ENCODE measurements at regions of chr1 and their contacts with region 1.

Region 1: DNA sequence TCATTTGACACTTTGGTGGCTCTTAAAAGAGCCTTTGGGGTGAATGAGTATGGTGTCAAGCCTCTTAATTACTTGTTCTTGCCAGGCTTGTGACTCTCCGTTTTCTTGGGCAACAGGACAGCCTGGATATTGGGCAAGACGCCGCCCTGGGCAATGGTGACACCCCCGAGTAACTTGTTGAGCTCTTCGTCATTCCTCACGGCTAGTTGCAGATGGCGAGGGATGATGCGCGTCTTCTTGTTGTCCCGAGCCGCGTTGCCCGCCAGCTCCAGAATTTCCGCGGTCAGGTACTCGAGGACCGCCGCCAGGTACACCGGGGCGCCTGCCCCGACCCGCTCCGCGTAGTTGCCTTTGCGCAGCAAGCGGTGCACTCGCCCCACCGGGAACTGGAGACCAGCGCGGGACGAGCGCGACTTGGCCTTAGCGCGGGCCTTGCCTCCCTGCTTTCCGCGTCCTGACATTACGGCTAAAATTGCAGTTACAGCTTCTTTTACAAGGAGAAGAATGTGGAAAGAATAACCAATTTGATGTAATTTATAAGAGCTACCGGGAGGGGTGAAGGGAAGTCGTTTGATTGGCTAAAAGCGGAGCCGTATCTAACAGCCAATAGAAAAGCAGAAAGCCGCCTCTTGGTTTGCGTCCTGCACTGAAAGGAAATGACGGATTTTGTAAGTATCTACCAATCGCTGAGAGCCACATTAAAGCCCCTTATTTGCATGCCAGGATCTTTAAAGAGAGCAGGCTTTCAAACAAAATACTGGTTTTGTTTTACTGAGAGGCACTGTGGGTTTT is 11.7 kb upstream of the BOLA1 start:
- DNase-seq: peak; percentile 86
- ATAC-seq: peak; percentile 80

Region 2: DNA sequence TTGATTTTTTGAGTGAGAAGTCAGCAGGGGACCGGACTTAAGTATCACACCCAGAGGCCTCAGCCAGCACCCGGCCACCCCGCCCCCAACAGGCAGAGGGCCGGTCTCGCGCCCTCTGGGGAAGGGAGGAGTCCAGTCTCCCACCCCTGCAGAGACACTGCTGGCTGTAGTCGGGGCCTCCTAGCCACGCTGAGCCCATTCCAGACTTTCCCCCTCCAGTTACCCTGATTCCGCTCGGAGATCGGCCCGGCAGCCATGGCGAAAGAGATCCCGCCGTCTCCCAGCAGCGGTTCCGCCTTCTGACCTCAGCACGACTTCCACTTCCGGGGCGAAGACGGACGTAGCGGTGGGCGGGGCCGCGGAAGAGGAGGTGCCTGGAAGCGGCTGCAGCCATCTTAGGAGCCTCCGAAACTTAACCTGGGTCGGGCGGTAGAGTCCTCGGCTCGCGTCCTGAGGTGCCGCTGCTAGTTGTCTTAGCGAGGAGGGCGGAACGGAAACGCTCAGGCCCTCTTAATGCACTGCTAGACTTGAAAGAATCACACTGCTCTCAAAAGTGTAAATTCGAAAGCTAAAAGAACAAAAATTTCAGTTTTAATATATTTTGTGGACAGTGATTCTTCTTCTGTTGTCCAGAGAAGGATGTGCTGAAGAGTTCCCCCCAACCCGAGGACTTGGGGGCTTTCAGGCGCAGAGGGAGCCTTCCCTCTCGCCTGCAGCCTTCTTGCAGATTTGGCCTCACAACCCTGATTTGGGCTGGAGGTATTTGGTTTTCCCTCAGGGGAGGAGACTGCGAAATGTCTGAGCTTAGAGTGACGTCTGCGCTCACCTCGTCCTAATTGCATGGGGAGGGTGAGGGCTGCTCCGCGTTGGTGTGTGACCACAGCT is 40.1 kb after region 1 on chr1 and contains the start of gene SF3B4:
- intact Hi-C with region 1: loop called (anchors 1 kb)
- DNase-seq: peak; percentile 97
- ATAC-seq: peak; percentile 99
- total RNA-seq, gene SF3B4: 24.8 TPM

Region 3: DNA sequence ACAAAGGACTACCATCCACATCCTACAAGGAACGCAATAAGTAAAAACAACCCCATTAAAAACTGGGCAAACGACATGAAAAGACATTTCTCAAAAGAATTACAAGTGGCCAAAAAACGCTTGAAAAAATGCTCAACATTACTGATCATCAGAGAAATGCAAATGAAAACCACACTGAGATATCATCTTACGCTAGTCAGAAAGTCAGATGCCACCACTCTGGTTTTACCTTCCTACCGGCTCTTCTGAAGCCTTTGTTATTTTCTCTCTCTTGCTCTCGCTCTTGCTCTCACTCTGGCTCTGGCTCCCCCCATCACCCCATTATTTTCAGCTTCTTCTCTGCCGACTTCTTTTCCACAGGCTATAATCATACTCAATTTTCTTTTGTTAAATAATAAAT is 218.7 kb after region 1 on chr1:
- intact Hi-C with region 1: no loop called
- DNase-seq: no peak
- ATAC-seq: no peak

Measured in Right ventricle myocardium inferior (tissue), 1 donor.